Panc1 (cell line): ENCODE measurements at regions of chr7 and their contacts with region 1.

Region 1: GRCh38 chr7:32415936-32416335 is 74.2 kb downstream of the LSM5 start:
- DNase-seq: no peak
- ATAC-seq: no peak
- H3K4me3 ChIP-seq: no peak overlapping the region
- H3K27ac ChIP-seq: no peak overlapping the region
- H3K4me1 ChIP-seq: no peaks in the 10 kb centered on the region
- H3K27me3 ChIP-seq: peaks cover 16% of the 10 kb centered on the region
- CTCF ChIP-seq: no peak

Region 2: DNA sequence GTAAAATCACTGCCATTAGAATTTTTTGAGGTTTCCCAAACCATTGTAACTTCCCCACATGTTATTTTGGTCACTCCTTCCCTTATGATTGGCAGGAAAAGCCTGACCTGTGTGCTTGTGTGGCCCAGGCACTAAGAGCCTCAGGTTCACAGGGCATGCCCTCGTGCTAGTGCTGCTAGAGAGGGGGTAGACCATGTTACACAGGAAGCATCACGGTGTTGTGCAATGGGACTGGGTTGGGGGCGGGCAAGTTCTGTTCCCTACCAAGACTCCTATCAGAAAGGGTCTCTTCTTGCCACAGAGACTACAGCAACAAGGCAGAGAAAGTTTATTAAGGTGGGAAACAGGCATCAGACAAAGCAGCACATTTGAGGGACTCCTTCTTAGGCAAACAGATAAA is 42.1 kb after region 1 on chr7:
- CTCF ChIA-PET with region 1: no interaction called
- POLR2A ChIA-PET with region 1: no interaction called
- in situ Hi-C with region 1: no loop called
- intact Hi-C with region 1: loop called (anchors 1 kb)
- DNase-seq: no peak
- ATAC-seq: no peak
- H3K4me3 ChIP-seq: no peak overlapping the region
- H3K27ac ChIP-seq: no peak overlapping the region
- H3K4me1 ChIP-seq: no peaks in the 10 kb centered on the region
- H3K27me3 ChIP-seq: peaks cover 4% of the 10 kb centered on the region; the same call in 1 of the 2 replicates
- CTCF ChIP-seq: no peak